ENCODE measurements at regions of chr16 and their contacts with region 1.

Region 1: DNA sequence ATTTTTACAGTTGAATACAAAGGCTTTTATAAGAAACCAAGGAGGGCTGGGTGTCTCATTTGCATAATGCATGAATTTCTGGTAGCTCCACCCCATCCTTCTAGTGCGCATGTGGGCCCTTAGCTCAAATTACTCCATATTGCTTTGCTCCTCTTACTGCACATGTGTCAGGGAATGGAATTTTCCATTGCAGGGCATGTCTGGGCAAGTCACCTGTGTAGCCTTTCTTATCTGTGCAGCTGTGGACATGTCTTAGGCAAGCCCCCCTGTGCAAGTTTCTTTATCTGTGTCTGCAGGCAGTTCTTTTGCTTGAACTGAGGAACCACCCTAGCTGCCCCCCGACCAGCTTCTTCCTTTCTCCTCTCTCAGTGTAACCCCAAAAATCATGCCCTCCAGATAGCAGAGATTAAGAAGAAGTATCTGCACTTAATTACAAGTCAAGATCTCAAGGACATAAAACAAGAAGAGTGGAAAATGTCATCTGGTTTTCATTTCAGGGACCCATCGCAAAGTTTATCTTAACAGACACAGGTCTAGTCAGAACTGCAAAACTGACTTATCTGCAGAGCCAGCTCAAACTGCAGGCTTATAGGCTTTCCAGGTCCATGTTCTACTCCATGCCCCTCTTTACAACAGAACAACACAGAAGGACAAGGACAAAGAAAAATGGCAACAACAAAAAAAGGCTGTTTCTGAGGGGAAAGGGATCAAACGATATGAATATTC is 137.9 kb upstream of the HS3ST4 start:
- DNase-seq: no peak
- ATAC-seq: no peak

Region 2: GRCh38 chr16:25493136-25493811 is 60.6 kb before region 1 on chr16:
- intact Hi-C with region 1: loop called in 1 of 2 experiments (anchors 10 kb)
- DNase-seq: no peak
- ATAC-seq: no peak

Region 3: DNA sequence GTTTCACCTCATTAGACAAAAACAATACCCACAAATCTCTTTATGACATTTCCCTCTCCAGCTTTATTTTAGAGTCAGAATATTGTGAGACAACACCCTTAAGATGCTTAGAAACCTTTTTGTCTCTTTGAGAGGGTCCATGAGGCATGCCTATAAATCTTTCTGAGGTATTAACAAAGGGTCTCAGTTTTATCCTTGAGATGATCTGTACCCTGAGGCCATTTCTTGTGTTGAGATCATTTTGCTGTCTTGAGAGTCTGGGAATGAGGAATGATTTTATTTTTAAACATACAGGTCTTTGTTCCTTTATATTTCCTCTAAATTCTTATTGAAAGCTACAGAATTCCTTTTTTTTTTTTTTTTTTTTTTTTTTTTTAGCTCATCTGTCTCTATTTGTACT is 41.8 kb before region 1 on chr16:
- intact Hi-C with region 1: no loop called
- DNase-seq: no peak
- ATAC-seq: no peak

Region 4: DNA sequence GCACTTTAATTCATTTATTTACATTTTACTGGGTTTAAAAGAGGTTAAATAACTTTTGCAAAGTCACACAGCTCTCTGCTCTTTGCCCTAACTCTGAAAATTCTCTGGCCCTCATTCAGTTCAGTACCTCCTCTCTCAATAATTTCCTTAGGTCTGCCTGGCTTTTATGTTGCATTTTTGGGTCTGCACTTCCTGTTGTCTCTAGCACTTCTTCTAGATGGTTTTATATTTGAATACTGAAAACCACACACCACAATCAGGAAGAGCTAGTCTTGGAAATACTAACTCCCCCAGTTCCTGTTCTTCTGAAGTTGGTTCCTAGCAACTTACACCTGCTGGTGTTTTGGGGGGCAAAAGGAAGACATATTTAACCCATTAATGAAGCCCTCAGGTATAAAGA is 715.8 kb after region 1 on chr16:
- intact Hi-C with region 1: no loop called
- DNase-seq: no peak
- ATAC-seq: no peak

Measured in left colon (tissue), 2 donors.